ENCODE measurements at regions of chr10 and their contacts with region 1.

Region 1: DNA sequence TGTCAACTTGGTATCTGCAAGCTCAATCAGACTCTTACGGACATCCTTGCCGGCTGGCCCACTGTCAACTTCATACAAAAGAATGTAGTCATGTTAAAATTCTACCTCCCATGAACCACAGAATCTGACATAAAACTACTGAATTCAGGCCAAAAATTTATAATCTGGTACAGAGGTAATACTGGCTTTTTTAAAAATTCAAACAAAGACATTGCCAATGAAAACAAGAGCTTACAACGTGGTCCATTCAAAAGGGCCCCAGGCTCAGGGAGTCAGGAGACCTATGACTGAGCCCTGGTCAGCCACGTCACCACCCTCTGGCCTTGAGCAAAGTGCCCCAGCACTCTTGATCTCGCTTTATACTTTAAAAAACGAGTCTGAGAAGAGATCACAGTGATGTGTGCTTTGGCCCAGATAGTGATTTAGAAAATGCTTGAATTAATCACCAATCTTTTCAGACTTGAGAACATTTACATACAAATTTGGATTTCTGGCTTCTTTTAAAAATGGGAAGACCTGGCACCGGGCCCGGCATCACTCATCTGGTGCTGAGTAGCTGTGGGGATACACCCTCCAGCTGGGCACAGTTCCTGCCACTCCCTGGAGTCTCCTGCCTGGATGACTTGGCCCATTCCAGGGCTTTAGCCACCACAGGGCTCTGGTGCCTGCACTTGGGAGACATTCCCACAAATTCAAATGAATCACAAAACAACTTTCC is 94.1 kb downstream of the PIP4K2A start:
- DNase-seq: peak; percentile 91
- H3K4me3 ChIP-seq: no peak overlapping the region
- H3K27ac ChIP-seq: peak overlapping the region; percentile 81
- H3K4me1 ChIP-seq: peaks cover 66% of the 10 kb centered on the region
- H3K27me3 ChIP-seq: no peaks in the 10 kb centered on the region
- CTCF ChIP-seq: no peak
- POLR2A ChIP-seq: no peak

Region 2: DNA sequence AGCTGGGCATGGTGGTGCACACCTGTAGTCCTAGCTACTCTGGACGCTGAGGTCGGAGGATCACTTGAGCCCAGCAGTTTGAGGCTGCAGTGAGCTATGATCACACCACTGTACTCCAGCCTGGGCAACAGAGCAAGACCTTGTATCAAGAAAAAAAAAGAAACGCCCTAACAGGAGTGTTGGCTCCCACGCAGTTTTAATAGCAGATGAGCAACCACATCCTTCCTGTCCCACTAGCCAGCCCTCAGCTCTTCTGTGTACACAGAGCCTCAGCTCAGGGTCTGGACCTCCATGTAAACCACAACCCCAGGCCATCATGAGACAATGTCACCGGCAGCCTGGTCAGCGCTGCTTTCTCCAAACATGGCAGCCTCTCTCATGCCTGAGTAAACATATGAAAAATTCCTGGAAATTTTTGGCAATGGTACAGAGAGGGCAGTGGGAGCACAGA is 14.1 kb before region 1 on chr10:
- CTCF ChIA-PET with region 1: interaction called, 4 read pairs
- POLR2A ChIA-PET with region 1: interaction called, 4 read pairs
- dilution Hi-C with region 1: no loop called
- intact Hi-C with region 1: loop called (anchors 1 kb)
- DNase-seq: peak; percentile 14
- H3K4me3 ChIP-seq: no peak overlapping the region
- H3K27ac ChIP-seq: no peak overlapping the region
- H3K4me1 ChIP-seq: peaks cover 3% of the 10 kb centered on the region
- H3K27me3 ChIP-seq: no peaks in the 10 kb centered on the region
- CTCF ChIP-seq: no peak
- POLR2A ChIP-seq: no peak

Region 3: DNA sequence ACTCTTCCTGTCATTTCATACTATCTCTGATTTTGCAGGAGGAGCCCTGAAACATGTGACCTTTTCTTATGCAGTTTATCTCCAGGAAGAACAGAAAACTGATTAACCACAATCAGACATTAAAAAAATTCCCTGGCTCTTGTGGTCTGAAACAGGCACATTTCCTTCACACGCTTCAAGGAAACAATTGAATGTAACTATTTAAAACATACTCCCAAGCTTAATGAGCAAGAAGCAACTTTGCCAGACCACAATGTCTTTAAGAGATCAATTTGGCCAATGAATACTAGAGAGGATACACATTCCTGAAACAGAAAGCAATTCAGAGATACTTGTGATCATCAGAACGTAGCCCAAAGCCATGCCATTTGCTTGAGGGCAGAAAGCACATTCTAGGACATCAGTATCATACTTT is 28.3 kb after region 1 on chr10:
- CTCF ChIA-PET with region 1: no interaction called
- POLR2A ChIA-PET with region 1: no interaction called
- dilution Hi-C with region 1: no loop called
- intact Hi-C with region 1: loop called (anchors 2 kb)
- DNase-seq: peak; percentile 63
- H3K4me3 ChIP-seq: peak overlapping the region in 1 of 3 experiments; percentile 42
- H3K27ac ChIP-seq: peak overlapping the region; percentile 66
- H3K4me1 ChIP-seq: peaks cover 34% of the 10 kb centered on the region
- H3K27me3 ChIP-seq: no peaks in the 10 kb centered on the region
- CTCF ChIP-seq: no peak
- POLR2A ChIP-seq: no peak

Region 4: DNA sequence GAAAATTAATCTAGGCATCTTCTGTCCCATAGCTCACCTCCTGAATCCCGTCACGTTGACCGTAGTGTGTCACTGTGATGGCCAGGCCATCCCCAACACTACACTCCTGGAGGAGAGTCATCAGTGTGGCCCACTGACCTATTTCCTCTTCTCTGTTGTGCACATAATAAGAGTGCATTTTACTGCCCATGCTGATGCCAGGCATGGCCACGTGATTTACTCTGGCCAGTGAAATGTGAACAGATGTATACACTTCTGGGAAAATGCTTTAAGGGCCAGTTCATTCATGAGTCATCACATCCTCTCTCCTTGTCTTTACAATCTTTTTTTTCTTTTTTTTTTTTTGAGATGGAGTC is 196.0 kb after region 1 on chr10:
- CTCF ChIA-PET with region 1: no interaction called
- POLR2A ChIA-PET with region 1: no interaction called
- dilution Hi-C with region 1: no loop called
- intact Hi-C with region 1: loop called (anchors 2 kb)
- DNase-seq: peak; percentile 93
- H3K4me3 ChIP-seq: no peak overlapping the region
- H3K27ac ChIP-seq: peak overlapping the region; percentile 86
- H3K4me1 ChIP-seq: peaks cover 15% of the 10 kb centered on the region
- H3K27me3 ChIP-seq: no peaks in the 10 kb centered on the region
- CTCF ChIP-seq: no peak
- POLR2A ChIP-seq: no peak